Gastrocnemius medialis (tissue), 4 donors: ENCODE measurements at regions of chr4 and their contacts with region 1.

Region 1: DNA sequence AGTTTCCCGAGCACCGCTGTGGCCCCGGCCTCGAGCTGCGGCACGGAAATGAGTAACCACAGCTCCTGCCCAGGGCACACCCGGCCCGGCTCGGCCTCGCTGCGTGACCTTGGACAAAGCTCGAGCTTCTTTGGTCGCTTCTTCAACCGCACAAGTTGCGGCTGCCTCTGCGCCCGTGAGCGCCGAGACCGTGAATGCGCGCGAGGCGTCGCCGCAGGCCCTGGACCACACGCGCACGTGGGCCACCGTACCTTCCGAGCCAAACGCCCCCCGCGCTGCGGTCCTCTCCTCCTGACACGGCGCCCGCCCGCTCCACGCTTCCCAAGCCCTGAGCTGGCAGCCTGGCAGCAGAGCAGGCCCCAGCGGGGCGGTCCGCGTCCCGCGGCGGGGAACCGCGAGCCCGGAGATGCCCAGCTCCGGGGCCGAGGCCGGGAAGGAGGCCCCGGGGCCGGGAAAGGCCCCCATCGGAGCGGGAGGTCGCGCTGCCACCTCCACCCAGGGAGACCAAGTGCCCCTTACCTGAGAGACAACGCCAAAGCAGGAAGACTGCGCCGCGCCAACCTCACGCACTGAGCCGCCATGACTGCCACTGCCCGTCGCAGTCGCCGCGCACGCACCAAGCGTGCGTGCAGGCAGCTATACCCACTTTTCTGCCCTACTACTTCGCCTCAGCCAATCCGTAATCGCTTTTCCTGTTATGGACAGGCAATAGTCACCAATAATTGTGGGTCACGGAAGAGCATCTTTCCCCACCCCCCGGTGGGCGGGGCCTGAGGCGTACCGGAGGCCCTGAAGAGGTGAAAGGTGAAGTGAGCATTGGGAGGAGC is at the start of gene GRPEL1:
- DNase-seq: peak; percentile 98 to 100
- ATAC-seq: peak; percentile 95 to 98
- H3K4me3 ChIP-seq: peak within 1 kb of the TSS; percentile 81 to 99 (median 86)
- H3K27ac ChIP-seq: peak within 1 kb of the TSS; percentile 89 to 98 (median 96)
- H3K4me1 ChIP-seq: peaks cover 31 to 33% of the 10 kb centered on the region in 2 donors
- H3K27me3 ChIP-seq: no peaks in the 10 kb centered on the region
- CTCF ChIP-seq: peak in 1 of 5 experiments; percentile 23
- POLR2A ChIP-seq: peak; percentile 99
- total RNA-seq, gene GRPEL1: 28.8 to 58.0 (median 35.8) TPM

Region 2: DNA sequence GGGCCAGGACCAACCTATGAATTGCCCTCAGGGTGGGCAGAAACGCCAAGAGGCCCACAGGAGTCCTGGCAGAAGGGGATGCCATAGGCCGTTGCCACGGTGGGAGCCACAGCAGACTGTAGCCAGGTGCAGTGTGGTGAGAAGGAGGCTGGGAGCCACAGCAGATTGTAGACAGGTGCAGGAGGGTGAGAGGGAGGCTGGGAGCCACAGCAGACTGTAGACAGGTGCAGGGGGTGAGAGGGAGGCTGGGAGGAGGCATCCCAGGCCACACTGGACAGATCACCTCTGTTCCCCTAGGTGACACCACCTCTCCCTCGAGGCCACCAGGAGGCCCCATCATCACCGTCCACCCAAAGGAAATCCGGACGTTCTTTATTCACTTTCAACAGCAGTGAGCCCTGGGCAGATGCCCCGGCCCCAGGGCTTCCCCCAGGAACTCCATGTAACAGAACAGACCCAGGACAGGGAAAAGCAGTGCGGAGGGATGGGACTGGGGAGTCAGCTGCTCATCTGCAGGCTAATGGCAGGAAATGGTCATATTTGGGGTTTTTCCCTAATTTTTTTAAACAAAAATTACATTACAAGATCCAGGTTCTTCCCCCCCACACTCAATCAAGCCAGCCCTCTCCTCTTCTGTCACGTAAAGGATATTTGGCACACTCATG is 446.6 kb before region 1 on chr4:
- in situ Hi-C with region 1: no loop called
- intact Hi-C with region 1: no loop called
- DNase-seq: no peak
- ATAC-seq: no peak
- H3K4me3 ChIP-seq: no peak overlapping the region
- H3K27ac ChIP-seq: no peak overlapping the region
- H3K4me1 ChIP-seq: no peaks in the 10 kb centered on the region
- H3K27me3 ChIP-seq: no peaks in the 10 kb centered on the region
- CTCF ChIP-seq: no peak
- POLR2A ChIP-seq: no peak

Region 3: DNA sequence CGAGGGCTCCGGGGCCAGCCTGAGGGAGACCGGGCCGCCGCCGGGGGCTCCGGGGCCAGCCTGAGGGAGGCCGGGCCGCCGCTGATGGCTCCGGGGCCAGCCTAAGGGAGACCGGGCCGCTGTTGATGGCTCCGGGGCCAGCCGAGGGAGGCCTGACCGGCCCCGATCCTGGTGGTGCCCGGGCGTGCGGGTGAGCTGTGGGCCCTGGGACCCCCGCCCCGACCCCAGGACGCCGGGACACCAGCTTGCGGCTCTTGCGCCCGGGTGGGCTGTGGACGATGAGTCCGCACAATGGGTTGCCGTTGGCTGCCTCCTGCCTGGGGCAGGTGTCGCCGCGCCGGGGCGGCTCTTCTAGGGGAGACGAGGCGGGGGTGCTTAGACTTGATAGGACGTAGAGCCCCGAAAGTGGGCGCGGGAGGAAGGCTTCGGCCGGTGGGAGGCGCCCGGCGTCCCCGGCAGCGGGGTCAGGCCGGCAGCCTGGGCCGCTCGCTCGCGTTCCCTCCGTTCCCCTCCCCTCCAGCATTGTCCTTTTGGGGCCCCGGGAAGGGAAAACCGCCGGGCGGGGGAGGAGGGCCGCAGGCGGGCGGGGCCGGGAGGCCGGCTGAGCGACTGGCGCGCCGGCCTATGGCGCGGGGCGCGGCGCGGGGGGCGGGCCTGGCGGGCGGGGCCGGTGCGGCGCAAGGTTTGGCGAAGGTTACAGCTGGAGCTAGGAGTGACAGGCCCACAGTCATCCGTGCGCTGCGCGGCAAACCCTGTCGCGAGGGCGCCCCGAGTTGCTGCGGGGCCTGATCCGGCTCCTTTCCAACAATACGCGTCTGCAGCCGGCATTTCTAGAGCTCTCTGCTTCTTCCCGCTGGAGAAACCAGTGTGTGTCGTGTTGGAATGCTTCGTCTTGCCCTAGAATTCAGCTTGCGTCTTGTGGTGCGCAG is 284.3 kb before region 1 on chr4:
- in situ Hi-C with region 1: no loop called
- intact Hi-C with region 1: loop called (anchors 5 kb)
- DNase-seq: peak; percentile 88 to 93
- ATAC-seq: peak; percentile 67 to 72
- H3K4me3 ChIP-seq: peak overlapping the region; percentile 74 to 98 (median 82)
- H3K27ac ChIP-seq: peak overlapping the region; percentile 95 to 100 (median 98)
- H3K4me1 ChIP-seq: peaks cover 58 to 59% of the 10 kb centered on the region in 2 donors
- H3K27me3 ChIP-seq: no peaks in the 10 kb centered on the region
- CTCF ChIP-seq: peak in 4 of 5 experiments; percentile 4 to 42 (median 19)
- POLR2A ChIP-seq: peak; percentile 94 to 95

Region 4: DNA sequence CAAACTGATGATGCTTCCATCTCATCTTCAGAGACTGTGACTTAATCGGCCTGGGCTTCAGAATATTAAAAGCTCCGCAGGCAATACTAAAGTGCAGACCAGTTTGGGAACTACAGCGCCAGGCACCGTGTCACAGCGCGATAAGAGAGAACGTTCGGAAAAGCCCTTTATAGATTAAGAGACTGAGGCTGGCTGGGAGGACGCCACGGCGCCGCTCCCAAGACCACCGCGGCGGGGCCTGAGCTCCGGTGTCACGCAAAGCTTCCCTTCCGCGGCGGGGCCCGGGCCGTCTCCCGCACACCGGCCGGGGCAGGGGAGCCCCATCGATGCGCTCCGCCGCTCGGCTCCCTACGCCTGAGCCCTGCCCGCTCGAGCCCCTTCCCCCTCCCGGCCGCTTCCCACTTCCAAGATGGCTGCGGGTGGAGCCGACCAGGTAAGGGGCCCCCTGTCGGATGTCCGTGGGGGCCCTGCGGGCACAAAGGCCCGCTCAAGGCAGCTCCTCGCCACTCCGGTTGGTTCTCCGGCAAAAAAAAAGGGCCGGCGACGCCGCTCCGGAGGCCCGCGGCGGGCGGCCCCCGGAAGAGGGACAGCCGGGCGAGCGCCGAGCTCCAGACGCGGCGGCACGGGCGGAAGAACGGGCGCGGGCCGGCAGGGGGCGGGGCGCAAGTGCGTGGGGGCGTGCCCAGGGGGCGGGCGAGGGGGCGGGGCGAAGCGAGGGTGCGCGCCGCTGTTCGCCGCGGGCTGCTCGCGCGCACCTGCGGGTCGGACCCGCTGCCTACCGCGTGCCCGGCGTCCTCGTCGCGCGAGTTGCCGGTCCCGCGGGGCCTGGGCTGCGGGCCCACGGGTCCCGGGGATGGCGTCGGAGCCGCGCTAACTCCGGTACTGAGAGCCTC is 158.3 kb before region 1 on chr4 and contains the start of gene TBC1D14:
- in situ Hi-C with region 1: loop called (anchors 5 to 25 kb)
- intact Hi-C with region 1: loop called (anchors 1 kb)
- DNase-seq: peak; percentile 85 to 86
- ATAC-seq: peak; percentile 85 to 88
- H3K4me3 ChIP-seq: peak within 1 kb of the TSS; percentile 73 to 100 (median 79)
- H3K27ac ChIP-seq: peak within 1 kb of the TSS; percentile 93 to 100 (median 98)
- H3K4me1 ChIP-seq: peaks cover 38 to 42% of the 10 kb centered on the region in 2 donors
- H3K27me3 ChIP-seq: no peaks in the 10 kb centered on the region
- CTCF ChIP-seq: peak; percentile 5 to 62 (median 36)
- POLR2A ChIP-seq: peak; percentile 81 to 87
- total RNA-seq, gene TBC1D14: 36.0 to 56.2 (median 41.4) TPM

Region 5: DNA sequence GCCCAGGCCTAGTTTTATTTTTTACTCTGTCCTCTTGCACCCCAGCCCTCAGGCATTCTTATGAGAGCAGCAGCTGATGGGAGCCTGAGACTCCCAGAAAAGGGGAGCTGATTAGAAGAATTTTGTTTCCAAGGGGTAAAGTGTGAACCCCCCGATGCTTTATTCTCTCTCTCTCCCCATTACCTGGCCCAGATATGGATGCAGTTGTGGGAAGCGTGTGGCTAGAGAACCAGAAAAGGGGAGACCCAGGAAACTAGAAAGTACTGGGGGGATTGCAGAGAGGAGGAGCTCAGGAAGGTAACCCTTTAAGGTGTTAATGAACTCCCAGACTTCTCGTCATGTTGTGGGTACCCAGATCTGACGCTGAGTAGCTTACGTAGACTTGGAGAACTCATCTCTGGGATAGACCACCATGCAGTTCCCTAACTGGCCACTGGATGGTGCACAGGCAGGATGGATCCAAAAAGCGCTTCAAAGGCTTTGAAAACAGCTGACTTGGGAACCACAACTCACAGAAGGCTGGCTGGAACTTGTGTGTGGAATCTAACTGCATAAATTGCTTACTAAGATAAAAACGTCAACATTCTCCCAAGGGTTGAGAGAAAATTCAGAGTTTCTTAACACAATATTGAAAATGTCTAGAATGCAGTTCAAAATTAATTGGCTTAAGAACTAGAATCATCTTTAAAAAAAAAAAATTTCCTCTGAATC is 93.4 kb before region 1 on chr4:
- in situ Hi-C with region 1: loop called in 2 of 4 experiments (anchors 5 kb)
- intact Hi-C with region 1: loop called (anchors 1 kb)
- DNase-seq: peak; percentile 56 to 76
- ATAC-seq: peak; percentile 77 to 87
- H3K4me3 ChIP-seq: no peak overlapping the region
- H3K27ac ChIP-seq: peak overlapping the region; percentile 4 to 88 (median 80)
- H3K4me1 ChIP-seq: peaks cover 36 to 37% of the 10 kb centered on the region in 2 donors
- H3K27me3 ChIP-seq: no peaks in the 10 kb centered on the region
- CTCF ChIP-seq: peak; percentile 95 to 98 (median 96)
- POLR2A ChIP-seq: no peak